Heart right ventricle (tissue), 16 donors: ENCODE measurements at regions of chr12 and their contacts with region 1.

Region 1: GRCh38 chr12:4246116-4246515 is 27.4 kb upstream of the CCND2 start:
- DNase-seq: no peak
- ATAC-seq: no peak
- H3K4me3 ChIP-seq: no peak overlapping the region
- H3K27ac ChIP-seq: no peak overlapping the region
- H3K4me1 ChIP-seq: peaks cover 0 to 4% (median 0%) of the 10 kb centered on the region in 9 donors
- H3K27me3 ChIP-seq: peaks cover 0 to 20% (median 11%) of the 10 kb centered on the region in 7 donors
- CTCF ChIP-seq: no peak

Region 2: DNA sequence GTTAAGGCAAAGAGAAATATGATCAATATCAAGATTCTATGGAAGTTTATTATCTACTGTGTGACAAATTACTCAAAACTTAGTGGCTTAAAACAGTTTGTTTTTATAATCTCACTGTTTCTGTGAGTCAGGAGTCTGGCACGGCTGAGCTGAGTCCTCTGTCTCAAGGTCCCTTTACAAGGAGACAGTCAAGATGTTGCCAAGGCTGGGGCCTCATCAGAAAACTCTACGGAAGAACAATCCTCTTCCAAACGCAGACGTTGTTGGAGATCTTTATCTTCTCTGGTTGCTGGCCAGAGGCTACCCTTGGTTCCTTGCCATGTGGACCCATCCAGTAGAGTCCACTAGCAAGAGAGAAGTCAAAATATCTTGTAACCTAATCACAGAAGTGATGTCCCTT is 73.1 kb before region 1 on chr12:
- intact Hi-C with region 1: loop called in 1 of 10 experiments (anchors 10 kb)
- DNase-seq: no peak
- ATAC-seq: no peak
- H3K4me3 ChIP-seq: no peak overlapping the region
- H3K27ac ChIP-seq: no peak overlapping the region
- H3K4me1 ChIP-seq: peaks cover 0 to 6% (median 0%) of the 10 kb centered on the region in 9 donors
- H3K27me3 ChIP-seq: peaks cover 0 to 17% (median 0%) of the 10 kb centered on the region in 7 donors
- CTCF ChIP-seq: no peak